ENCODE measurements at regions of chr12 and their contacts with region 1.

Region 1: DNA sequence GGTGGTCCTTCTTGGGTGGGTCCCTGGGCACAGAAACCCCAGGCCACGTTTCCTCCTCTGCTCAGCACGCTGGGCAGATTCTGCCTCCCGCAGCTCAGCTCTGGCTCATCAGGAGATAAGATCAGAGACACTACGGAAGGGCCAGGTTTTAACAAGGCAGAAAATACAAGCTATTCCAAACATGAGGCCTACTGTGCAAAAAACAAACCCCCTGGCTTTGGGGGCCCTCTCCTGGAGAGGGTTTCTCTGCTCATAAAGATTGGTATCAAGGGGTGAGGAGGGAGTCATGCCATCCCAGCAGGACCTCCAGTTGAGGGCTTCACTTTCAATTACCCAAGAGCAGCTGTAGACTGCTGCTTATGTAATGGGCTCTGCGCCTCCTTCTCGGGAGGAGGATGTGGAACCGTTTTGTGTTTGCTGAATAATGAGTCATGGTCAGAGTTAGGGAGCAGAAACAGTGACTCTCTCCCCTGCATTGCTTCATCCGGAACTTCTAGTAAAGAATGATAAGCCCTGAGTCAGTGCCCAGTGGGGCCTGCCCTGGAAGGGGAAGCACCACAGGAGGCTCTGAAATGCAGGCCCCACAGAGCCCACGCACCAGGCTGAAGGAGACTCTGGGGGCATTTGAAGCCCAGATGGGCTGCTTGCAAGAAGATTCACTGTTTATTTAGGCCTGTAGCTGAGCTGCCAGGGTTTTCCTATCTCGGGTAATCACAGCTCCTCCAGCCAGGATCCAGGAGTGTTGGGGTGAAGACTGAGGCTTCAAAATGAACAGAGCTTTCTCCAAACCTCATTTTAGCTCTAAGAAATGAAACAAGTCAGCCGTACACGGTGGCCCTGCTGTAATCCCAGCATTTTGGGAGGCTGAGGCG is 79.3 kb downstream of the SSPN start:
- DNase-seq: peak; percentile 81
- ATAC-seq: peak; percentile 99
- H3K4me3 Mint-ChIP-seq: no peak overlapping the region
- H3K27ac Mint-ChIP-seq: peak overlapping the region; percentile 35
- H3K4me1 Mint-ChIP-seq: peaks cover 26% of the 10 kb centered on the region
- H3K27me3 Mint-ChIP-seq: peaks cover 8% of the 10 kb centered on the region

Region 2: GRCh38 chr12:26113853-26114719 is 160.6 kb before region 1 on chr12:
- CTCF ChIA-PET with region 1: no interaction called
- POLR2A ChIA-PET with region 1: no interaction called
- intact Hi-C with region 1: loop called in 1 of 2 experiments (anchors 2 kb)
- DNase-seq: peak; percentile 87
- ATAC-seq: peak; percentile 88
- H3K4me3 Mint-ChIP-seq: peak overlapping the region; percentile 69
- H3K27ac Mint-ChIP-seq: peak overlapping the region; percentile 25
- H3K4me1 Mint-ChIP-seq: peaks cover 11% of the 10 kb centered on the region
- H3K27me3 Mint-ChIP-seq: peaks cover 37% of the 10 kb centered on the region

Region 3: GRCh38 chr12:26177283-26177682 is 97.4 kb before region 1 on chr12:
- CTCF ChIA-PET with region 1: no interaction called
- POLR2A ChIA-PET with region 1: no interaction called
- intact Hi-C with region 1: no loop called
- DNase-seq: no peak
- ATAC-seq: no peak
- H3K4me3 Mint-ChIP-seq: no peak overlapping the region
- H3K27ac Mint-ChIP-seq: no peak overlapping the region
- H3K4me1 Mint-ChIP-seq: no peaks in the 10 kb centered on the region
- H3K27me3 Mint-ChIP-seq: peaks cover 24% of the 10 kb centered on the region

Region 4: DNA sequence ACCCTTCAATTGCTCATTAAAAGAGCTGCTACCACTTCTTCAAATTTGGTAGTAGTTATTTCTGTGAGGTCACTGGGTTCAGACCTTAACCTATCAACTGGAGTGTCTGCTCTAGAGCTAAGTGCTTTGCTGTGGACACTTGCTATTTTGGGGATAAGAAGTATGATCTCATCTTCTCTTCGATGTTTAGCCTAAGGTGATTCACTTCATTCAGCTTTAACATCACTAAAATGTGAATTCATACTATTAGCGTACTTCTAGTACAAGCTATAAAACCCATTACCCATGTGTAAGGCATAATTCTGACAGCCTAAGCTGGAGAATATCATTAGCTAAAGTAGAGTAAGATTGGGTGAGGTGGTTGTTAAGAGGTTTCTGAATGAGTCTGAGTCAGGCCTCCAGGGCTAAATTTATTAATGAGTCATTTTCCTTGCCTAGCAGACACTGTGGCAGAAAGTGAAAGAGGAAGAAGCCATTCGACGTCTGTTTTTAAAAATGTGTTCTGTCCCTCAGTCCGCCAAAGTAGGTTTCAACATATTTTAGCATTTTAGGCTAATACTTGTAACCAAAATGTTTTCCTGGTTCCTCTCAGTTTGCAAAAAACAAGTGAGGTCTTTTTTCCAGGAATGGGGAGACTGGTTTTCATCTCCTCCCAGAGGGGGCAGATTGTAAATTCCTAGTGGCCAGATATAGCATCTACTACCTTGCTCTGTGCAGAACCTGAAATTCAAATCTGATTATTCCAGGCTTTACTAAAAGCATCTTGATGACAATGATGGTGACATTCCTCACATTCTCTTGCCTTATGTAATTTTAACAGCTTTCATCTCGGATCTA is 24.3 kb after region 1 on chr12:
- CTCF ChIA-PET with region 1: no interaction called
- POLR2A ChIA-PET with region 1: no interaction called
- intact Hi-C with region 1: loop called (anchors 1 kb)
- DNase-seq: no peak
- ATAC-seq: peak; percentile 96
- H3K4me3 Mint-ChIP-seq: no peak overlapping the region
- H3K27ac Mint-ChIP-seq: no peak overlapping the region
- H3K4me1 Mint-ChIP-seq: peaks cover 24% of the 10 kb centered on the region
- H3K27me3 Mint-ChIP-seq: peaks cover 9% of the 10 kb centered on the region

Region 5: GRCh38 chr12:26318661-26319068 is 44.0 kb after region 1 on chr12:
- CTCF ChIA-PET with region 1: no interaction called
- POLR2A ChIA-PET with region 1: no interaction called
- intact Hi-C with region 1: loop called in 1 of 2 experiments (anchors 2 kb)
- DNase-seq: peak; percentile 18
- ATAC-seq: peak; percentile 53
- H3K4me3 Mint-ChIP-seq: no peak overlapping the region
- H3K27ac Mint-ChIP-seq: no peak overlapping the region
- H3K4me1 Mint-ChIP-seq: peaks cover 10% of the 10 kb centered on the region
- H3K27me3 Mint-ChIP-seq: peaks cover 10% of the 10 kb centered on the region

Measured in activated CD4-positive, alpha-beta T cell treated with anti-CD3 and anti-CD28 coated beads for 36 hours (primary cell).